Psoas muscle (tissue), 8 donors: ENCODE measurements at regions of chr12 and their contacts with region 1.

Region 1: DNA sequence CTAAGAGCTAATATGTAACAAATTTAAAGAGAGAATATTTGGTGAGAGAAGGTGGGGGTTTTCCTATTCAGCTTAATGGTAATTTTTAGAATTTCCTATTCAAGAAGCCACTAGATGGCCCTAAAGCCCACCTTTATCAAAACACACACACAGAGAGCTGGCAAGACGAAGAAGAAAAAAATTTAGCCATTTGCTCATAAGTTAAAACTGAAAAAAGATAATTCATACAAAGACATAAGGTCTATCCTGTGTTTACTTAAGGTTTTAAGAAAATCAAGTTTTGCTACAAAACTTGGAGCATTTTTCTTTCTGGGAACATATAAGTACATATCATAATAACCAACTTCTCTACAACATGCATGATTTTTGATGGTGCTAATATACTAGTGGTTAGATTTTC is 46.8 kb upstream of the PCED1B start:
- DNase-seq: no peak
- ATAC-seq: peak in 3 of 4 donors; percentile 57 to 86 (median 59)
- H3K4me3 ChIP-seq: no peak overlapping the region
- H3K27ac ChIP-seq: no peak overlapping the region
- H3K4me1 ChIP-seq: peaks cover 2% of the 10 kb centered on the region
- H3K27me3 ChIP-seq: no peaks in the 10 kb centered on the region
- CTCF ChIP-seq: peak; percentile 47

Region 2: GRCh38 chr12:47397664-47398281 is 365.1 kb after region 1 on chr12:
- intact Hi-C with region 1: loop called (anchors 5 to 10 kb)
- DNase-seq: no peak
- ATAC-seq: peak in 3 of 4 donors; percentile 61 to 69 (median 66)
- H3K4me3 ChIP-seq: no peak overlapping the region
- H3K27ac ChIP-seq: no peak overlapping the region
- H3K4me1 ChIP-seq: peaks cover 10% of the 10 kb centered on the region
- H3K27me3 ChIP-seq: no peaks in the 10 kb centered on the region
- CTCF ChIP-seq: peak; percentile 43

Region 3: GRCh38 chr12:47408171-47408871 is 375.7 kb after region 1 on chr12:
- intact Hi-C with region 1: loop called in 1 of 2 experiments (anchors 10 kb)
- DNase-seq: no peak
- ATAC-seq: no peak
- H3K4me3 ChIP-seq: no peak overlapping the region
- H3K27ac ChIP-seq: no peak overlapping the region
- H3K4me1 ChIP-seq: peaks cover 7% of the 10 kb centered on the region
- H3K27me3 ChIP-seq: no peaks in the 10 kb centered on the region
- CTCF ChIP-seq: no peak

Region 4: GRCh38 chr12:47651368-47652254 is 619.0 kb after region 1 on chr12:
- intact Hi-C with region 1: loop called in 1 of 2 experiments (anchors 10 kb)
- DNase-seq: peak; percentile 30 to 62
- ATAC-seq: peak; percentile 77 to 92 (median 85)
- H3K4me3 ChIP-seq: peak overlapping the region; percentile 33
- H3K27ac ChIP-seq: no peak overlapping the region
- H3K4me1 ChIP-seq: peaks cover 5% of the 10 kb centered on the region
- H3K27me3 ChIP-seq: no peaks in the 10 kb centered on the region
- CTCF ChIP-seq: peak; percentile 74

Region 5: GRCh38 chr12:47686645-47687240 is 654.1 kb after region 1 on chr12:
- intact Hi-C with region 1: loop called in 1 of 2 experiments (anchors 10 kb)
- DNase-seq: no peak
- ATAC-seq: peak in 1 of 4 donors; percentile 49
- H3K4me3 ChIP-seq: no peak overlapping the region
- H3K27ac ChIP-seq: no peak overlapping the region
- H3K4me1 ChIP-seq: no peaks in the 10 kb centered on the region
- H3K27me3 ChIP-seq: no peaks in the 10 kb centered on the region
- CTCF ChIP-seq: peak; percentile 53